ENCODE measurements at regions of chr9 and their contacts with region 1.

Region 1: GRCh38 chr9:30775236-30775635 is 1609.2 kb upstream of the ACO1 start:
- DNase-seq: no peak
- H3K4me3 Mint-ChIP-seq: no peak overlapping the region
- H3K27ac Mint-ChIP-seq: no peak overlapping the region
- H3K4me1 Mint-ChIP-seq: no peaks in the 10 kb centered on the region
- H3K27me3 Mint-ChIP-seq: no peaks in the 10 kb centered on the region

Region 2: DNA sequence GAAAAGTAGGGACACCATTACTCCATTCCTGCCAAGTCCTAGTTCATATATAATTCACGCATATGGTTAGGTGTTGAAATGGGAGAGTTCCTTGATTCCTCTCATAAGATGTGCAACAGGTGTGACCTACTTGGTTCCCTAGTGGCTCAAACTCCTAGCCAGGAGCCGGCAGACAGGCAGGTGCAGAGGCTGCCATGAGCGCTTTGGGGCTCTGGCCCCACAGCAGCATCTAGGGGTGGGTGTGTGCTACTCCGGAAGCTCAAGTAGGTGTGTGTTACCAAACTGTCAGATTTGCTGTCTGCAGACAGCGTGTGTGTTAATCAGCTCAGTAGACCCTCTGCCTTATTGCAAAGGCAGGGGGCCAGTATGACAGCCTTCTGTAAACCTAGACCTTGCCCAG is 43.2 kb before region 1 on chr9:
- intact Hi-C with region 1: loop called (anchors 5 kb)
- DNase-seq: no peak
- H3K4me3 Mint-ChIP-seq: no peak overlapping the region
- H3K27ac Mint-ChIP-seq: no peak overlapping the region
- H3K4me1 Mint-ChIP-seq: no peaks in the 10 kb centered on the region
- H3K27me3 Mint-ChIP-seq: no peaks in the 10 kb centered on the region

Measured in activated T-helper 1 cell treated with anti-CD3 and anti-CD28 coated beads, Interleukin-12 subunit alpha, Interleukin-12 subunit beta, Interleukin-2, Interleukin-4 antibody, amounts not matched to agents 30 ng/mL and 10 ng/mL and 1 ng/mL, durations not matched to agents 14 hours and 24 hours and 36 hours (primary cell).